B cell (primary cell): ENCODE measurements at regions of chr3 and their contacts with region 1.

Region 1: GRCh38 chr3:52278510-52279069 is at the start of gene WDR82:
- DNase-seq: peak; percentile 95
- ATAC-seq: peak; percentile 86
- H3K4me3 ChIP-seq: peak within 1 kb of the TSS; percentile 67 to 94 (median 77)
- H3K4me3 Mint-ChIP-seq: peak within 1 kb of the TSS; percentile 95
- H3K27ac ChIP-seq: peak within 1 kb of the TSS; percentile 83 to 87
- H3K27ac Mint-ChIP-seq: peak within 1 kb of the TSS; percentile 100
- H3K4me1 ChIP-seq: peaks cover 35 to 51% of the 10 kb centered on the region in 2 donors
- H3K4me1 Mint-ChIP-seq: peaks cover 47% of the 10 kb centered on the region
- H3K27me3 ChIP-seq: no peaks in the 10 kb centered on the region
- H3K27me3 Mint-ChIP-seq: no peaks in the 10 kb centered on the region
- CTCF ChIP-seq: peak; percentile 24
- total RNA-seq, gene WDR82: 94.0 and 101 TPM in 2 replicates

Region 2: DNA sequence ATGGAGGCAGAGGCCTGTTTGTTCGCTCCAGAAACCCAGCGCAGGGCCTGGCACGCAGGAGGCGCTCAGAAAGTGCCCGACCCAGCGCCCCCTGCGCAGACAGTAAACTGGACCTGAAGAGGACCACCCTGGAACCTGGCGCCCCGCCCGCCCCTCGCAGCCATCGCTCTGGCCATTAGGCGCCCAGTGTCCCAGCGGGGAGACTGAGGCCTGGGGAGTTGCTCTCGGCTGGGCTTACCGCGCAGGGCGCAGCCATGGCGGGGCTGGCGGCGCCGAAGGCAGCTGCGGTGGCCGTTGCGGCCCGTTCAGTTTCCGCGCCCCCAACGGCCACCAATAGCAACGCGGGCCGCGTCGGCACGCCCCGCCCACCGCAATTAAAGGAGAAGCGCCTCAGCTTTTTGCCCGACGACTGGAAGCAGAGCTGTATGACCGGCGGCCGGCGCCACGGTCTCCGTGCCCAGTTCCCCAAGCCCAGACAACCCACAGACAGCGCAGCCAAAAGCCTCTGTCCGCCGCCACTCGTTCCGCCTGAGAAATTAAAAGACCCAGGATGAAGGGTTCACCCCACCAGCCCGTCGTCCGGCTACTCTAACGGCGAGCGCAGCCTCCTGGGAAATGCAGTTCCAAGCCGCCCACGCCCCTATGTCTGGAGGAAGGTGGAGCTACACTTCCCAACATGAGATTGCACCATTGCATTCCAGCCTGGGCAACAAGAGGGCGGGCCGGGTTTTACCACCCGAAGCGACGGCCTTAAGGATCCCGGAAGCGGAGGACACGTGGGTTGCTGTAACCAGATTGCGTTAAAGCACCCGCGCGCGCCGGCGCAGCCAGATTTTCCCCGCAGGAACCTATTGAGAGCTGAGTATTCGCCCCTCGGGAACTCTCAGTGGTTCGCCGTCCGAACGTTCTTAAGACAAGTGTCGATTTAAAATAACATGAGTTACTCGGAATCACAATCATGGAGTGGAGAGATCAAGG is 124.2 kb before region 1 on chr3 and contains the start of gene POC1A:
- CTCF ChIA-PET with region 1: no interaction called
- POLR2A ChIA-PET with region 1: no interaction called
- intact Hi-C with region 1: loop called (anchors 1 kb)
- DNase-seq: peak; percentile 91
- ATAC-seq: peak; percentile 85
- H3K4me3 ChIP-seq: peak within 1 kb of the TSS; percentile 73 to 93 (median 92)
- H3K4me3 Mint-ChIP-seq: peak within 1 kb of the TSS; percentile 98
- H3K27ac ChIP-seq: peak within 1 kb of the TSS; percentile 79 to 81
- H3K27ac Mint-ChIP-seq: peak within 1 kb of the TSS; percentile 98
- H3K4me1 ChIP-seq: peaks cover 4 to 15% of the 10 kb centered on the region in 2 donors
- H3K4me1 Mint-ChIP-seq: peaks cover 14% of the 10 kb centered on the region
- H3K27me3 ChIP-seq: no peaks in the 10 kb centered on the region
- H3K27me3 Mint-ChIP-seq: no peaks in the 10 kb centered on the region
- CTCF ChIP-seq: peak; percentile 13
- total RNA-seq, gene POC1A: 2.4 and 2.8 TPM in 2 replicates

Region 3: GRCh38 chr3:52231502-52232293 is 46.9 kb before region 1 on chr3:
- CTCF ChIA-PET with region 1: interaction called, 265 read pairs
- POLR2A ChIA-PET with region 1: interaction called, 38 read pairs
- intact Hi-C with region 1: no loop called
- DNase-seq: peak; percentile 89
- ATAC-seq: peak; percentile 93
- H3K4me3 ChIP-seq: no peak overlapping the region
- H3K4me3 Mint-ChIP-seq: peak overlapping the region; percentile 37
- H3K27ac ChIP-seq: no peak overlapping the region
- H3K27ac Mint-ChIP-seq: peak overlapping the region; percentile 85
- H3K4me1 ChIP-seq: peaks cover 20 to 44% of the 10 kb centered on the region in 2 donors
- H3K4me1 Mint-ChIP-seq: peaks cover 49% of the 10 kb centered on the region
- H3K27me3 ChIP-seq: no peaks in the 10 kb centered on the region
- H3K27me3 Mint-ChIP-seq: no peaks in the 10 kb centered on the region
- CTCF ChIP-seq: peak; percentile 94

Region 4: GRCh38 chr3:52253314-52254304 is 25.0 kb before region 1 on chr3:
- CTCF ChIA-PET with region 1: interaction called, 14 read pairs
- POLR2A ChIA-PET with region 1: interaction called, 14 read pairs
- intact Hi-C with region 1: loop called (anchors 1 kb)
- DNase-seq: peak; percentile 92
- ATAC-seq: peak; percentile 96
- H3K4me3 ChIP-seq: peak overlapping the region in 2 of 5 experiments; percentile 25 to 35
- H3K4me3 Mint-ChIP-seq: peak overlapping the region; percentile 78
- H3K27ac ChIP-seq: peak overlapping the region; percentile 72 to 89
- H3K27ac Mint-ChIP-seq: peak overlapping the region; percentile 94
- H3K4me1 ChIP-seq: peaks cover 22 to 29% of the 10 kb centered on the region in 2 donors
- H3K4me1 Mint-ChIP-seq: peaks cover 39% of the 10 kb centered on the region
- H3K27me3 ChIP-seq: no peaks in the 10 kb centered on the region
- H3K27me3 Mint-ChIP-seq: no peaks in the 10 kb centered on the region
- CTCF ChIP-seq: no peak

Region 5: DNA sequence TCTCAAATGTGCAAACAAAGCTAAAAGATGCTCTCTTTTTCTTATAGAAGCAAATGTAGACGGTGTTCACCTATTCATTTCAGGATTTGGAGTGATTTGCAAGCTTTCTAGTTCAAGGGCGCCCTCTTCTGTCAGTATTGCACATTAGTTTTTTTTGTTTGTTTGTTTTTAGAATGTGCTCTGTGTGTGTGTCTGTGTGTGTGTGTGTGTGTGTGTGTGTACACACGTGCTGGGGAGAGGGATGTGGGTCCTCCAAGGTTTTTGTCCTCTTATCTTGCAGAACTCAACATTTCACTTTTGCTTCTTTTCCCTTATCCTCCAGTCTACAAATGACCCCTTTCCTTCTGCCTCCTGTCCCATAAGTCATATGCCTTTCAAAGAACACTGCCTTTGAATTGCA is 61.0 kb after region 1 on chr3:
- CTCF ChIA-PET with region 1: interaction called, 24 read pairs
- POLR2A ChIA-PET with region 1: interaction called, 3 read pairs
- intact Hi-C with region 1: no loop called
- DNase-seq: peak; percentile 83
- ATAC-seq: peak; percentile 68
- H3K4me3 ChIP-seq: no peak overlapping the region
- H3K4me3 Mint-ChIP-seq: no peak overlapping the region
- H3K27ac ChIP-seq: no peak overlapping the region
- H3K27ac Mint-ChIP-seq: peak overlapping the region; percentile 61
- H3K4me1 ChIP-seq: no peaks in the 10 kb centered on the region
- H3K4me1 Mint-ChIP-seq: peaks cover 3% of the 10 kb centered on the region
- H3K27me3 ChIP-seq: no peaks in the 10 kb centered on the region
- H3K27me3 Mint-ChIP-seq: no peaks in the 10 kb centered on the region
- CTCF ChIP-seq: peak; percentile 86